Thyroid gland (tissue), 4 donors: ENCODE measurements at regions of chr6 and their contacts with region 1.

Region 1: DNA sequence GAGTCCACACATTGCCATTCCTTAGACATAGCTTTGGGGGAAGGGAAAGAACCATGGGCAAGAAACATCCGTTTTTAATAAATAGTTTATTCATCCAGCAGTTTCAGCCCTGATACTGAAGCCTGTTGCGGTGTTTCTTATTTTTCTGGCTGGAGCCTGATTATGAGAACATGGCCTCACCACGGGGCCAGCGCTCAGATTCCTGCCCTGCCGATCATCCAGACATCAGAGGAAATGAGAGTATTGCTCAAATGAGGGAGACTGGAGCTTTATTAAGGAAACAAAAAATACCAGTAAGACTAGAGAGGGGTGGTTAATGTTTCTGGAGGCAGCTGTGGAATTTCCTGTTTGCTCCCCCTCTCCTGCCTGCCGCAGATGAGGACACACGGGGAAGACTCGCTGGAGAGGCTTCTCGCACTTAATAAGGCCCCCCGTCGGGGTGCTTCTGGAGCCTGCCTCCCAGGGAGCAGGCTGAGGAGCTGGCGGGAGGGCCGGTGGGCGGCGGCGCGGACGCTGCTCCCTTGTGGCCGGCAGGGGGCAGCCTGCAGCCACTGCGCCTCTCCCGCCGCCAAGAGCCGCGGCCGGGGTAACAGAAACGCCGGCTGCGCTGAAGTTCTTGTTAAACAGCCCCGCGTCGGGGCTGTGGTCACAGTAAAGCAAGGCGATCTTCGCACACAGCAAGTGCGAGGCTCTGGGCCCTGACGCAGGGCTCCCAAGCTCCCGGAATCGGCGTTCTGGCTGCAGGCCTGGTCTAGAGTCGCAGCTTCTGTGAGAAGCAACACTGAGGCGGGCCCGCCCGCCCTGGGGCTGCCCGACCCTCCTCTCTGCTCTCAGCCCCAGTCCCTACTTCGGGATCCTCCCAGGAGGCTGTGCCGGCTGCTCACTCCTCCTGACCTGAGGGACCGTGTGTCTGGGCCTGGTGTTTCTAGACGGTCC is 17.5 kb downstream of the LEMD2 start:
- DNase-seq: peak; percentile 88 to 91
- H3K4me3 ChIP-seq: no peak overlapping the region
- H3K27ac ChIP-seq: peak overlapping the region; percentile 42 to 93 (median 81)
- H3K4me1 ChIP-seq: peaks cover 26 to 42% of the 10 kb centered on the region in 2 donors
- H3K27me3 ChIP-seq: no peaks in the 10 kb centered on the region
- CTCF ChIP-seq: peak; percentile 70 to 99 (median 96)
- POLR2A ChIP-seq: peak in 1 of 2 donors; percentile 15

Region 2: DNA sequence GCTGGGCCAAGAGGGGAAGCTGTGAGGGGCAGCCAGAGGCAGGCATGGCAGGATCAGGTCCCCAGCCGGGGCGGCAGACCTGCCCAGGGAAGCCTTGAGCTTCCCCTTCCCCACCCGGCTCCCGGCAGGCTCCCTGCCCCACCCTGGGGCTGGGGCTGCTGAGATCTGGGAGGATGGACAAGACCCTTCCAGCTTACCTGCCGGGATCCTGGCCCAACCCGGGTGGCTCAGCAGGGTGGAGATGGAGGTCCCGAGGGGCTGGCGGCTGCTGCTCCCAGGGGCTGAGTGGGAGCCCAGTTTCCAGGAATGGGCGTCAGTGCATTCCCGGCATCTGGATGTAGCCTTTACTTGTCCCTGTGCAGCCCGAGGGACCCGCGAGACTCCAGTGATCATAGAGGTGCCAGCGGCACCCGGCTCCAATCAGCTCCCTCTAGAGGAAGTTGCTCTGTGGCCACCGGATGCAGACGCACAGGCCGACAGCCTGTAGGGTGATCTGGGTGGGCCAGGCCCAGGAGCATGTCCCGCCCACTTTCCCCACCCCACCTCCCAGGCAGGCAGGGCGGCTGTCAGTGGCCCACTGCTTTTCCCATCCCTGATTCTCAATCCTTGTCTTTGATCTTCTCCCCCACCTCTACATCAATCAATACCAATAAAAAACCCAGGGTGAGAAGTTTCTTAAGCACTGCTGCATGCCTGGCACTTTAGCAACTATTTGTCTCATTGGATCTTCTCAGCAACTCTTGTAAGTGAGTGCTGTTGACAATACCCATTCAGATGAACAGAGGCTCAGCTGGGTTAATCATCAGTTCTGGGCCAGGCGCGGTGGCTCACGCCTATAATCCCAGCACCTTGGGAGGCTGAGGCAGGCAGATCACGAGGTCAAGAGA is 191.3 kb before region 1 on chr6 and contains the start of gene BAK1:
- intact Hi-C with region 1: loop called (anchors 10 kb)
- DNase-seq: peak; percentile 94
- H3K4me3 ChIP-seq: peak within 1 kb of the TSS; percentile 51 to 68 (median 61)
- H3K27ac ChIP-seq: peak within 1 kb of the TSS; percentile 34 to 81 (median 74)
- H3K4me1 ChIP-seq: peaks cover 9 to 18% of the 10 kb centered on the region in 2 donors
- H3K27me3 ChIP-seq: no peaks in the 10 kb centered on the region
- CTCF ChIP-seq: peak in 5 of 6 experiments; percentile 15 to 48 (median 41)
- POLR2A ChIP-seq: peak in 1 of 2 donors; percentile 83
- total RNA-seq, gene BAK1: 2.3 to 8.5 (median 4.6) TPM

Region 3: GRCh38 chr6:33822575-33823395 is 51.4 kb after region 1 on chr6:
- intact Hi-C with region 1: loop called (anchors 10 kb)
- DNase-seq: peak; percentile 52 to 66
- H3K4me3 ChIP-seq: no peak overlapping the region
- H3K27ac ChIP-seq: peak overlapping the region in 2 of 3 donors; percentile 51 to 73
- H3K4me1 ChIP-seq: peaks cover 25 to 51% of the 10 kb centered on the region in 2 donors
- H3K27me3 ChIP-seq: no peaks in the 10 kb centered on the region
- CTCF ChIP-seq: peak in 2 of 6 experiments; percentile 37 to 51
- POLR2A ChIP-seq: no peak

Region 4: DNA sequence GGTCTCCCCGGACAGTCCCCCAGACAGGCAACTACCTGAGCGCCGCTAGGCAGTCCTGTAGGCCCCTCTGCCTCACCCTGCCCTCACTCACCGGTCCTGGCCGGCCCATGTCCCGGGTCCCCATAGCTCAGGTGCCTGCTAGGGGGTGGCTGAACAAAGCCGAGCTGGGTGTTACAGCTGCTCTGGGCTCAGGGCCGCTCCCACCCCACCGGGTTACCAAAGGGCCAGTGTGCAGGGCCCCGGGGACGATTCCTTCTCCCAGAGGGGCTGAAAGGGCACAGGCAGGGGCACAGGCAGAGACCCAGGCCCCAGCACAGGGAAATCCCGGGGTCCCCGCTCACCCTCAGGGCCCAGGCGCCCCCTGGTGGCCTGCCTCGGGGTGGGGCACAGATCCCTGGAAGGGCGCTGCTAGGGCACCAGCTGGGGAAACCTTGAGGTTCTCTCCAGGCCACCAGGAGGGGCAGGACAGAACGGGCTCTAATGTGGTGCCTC is 256.1 kb after region 1 on chr6:
- intact Hi-C with region 1: loop called (anchors 5 kb)
- DNase-seq: peak; percentile 35 to 44
- H3K4me3 ChIP-seq: no peak overlapping the region
- H3K27ac ChIP-seq: no peak overlapping the region
- H3K4me1 ChIP-seq: no peaks in the 10 kb centered on the region
- H3K27me3 ChIP-seq: no peaks in the 10 kb centered on the region
- CTCF ChIP-seq: peak; percentile 40 to 73 (median 60)
- POLR2A ChIP-seq: no peak

Region 5: GRCh38 chr6:34154668-34155447 is 383.4 kb after region 1 on chr6:
- intact Hi-C with region 1: loop called (anchors 2 kb)
- DNase-seq: peak; percentile 49 to 53
- H3K4me3 ChIP-seq: no peak overlapping the region
- H3K27ac ChIP-seq: no peak overlapping the region
- H3K4me1 ChIP-seq: peaks cover 0 to 8% of the 10 kb centered on the region in 2 donors
- H3K27me3 ChIP-seq: peaks cover 5% of the 10 kb centered on the region
- CTCF ChIP-seq: peak; percentile 81 to 99 (median 97)
- POLR2A ChIP-seq: no peak